Naive thymus-derived CD8-positive, alpha-beta T cell (primary cell): ENCODE measurements at regions of chr1 and their contacts with region 1.

Region 1: DNA sequence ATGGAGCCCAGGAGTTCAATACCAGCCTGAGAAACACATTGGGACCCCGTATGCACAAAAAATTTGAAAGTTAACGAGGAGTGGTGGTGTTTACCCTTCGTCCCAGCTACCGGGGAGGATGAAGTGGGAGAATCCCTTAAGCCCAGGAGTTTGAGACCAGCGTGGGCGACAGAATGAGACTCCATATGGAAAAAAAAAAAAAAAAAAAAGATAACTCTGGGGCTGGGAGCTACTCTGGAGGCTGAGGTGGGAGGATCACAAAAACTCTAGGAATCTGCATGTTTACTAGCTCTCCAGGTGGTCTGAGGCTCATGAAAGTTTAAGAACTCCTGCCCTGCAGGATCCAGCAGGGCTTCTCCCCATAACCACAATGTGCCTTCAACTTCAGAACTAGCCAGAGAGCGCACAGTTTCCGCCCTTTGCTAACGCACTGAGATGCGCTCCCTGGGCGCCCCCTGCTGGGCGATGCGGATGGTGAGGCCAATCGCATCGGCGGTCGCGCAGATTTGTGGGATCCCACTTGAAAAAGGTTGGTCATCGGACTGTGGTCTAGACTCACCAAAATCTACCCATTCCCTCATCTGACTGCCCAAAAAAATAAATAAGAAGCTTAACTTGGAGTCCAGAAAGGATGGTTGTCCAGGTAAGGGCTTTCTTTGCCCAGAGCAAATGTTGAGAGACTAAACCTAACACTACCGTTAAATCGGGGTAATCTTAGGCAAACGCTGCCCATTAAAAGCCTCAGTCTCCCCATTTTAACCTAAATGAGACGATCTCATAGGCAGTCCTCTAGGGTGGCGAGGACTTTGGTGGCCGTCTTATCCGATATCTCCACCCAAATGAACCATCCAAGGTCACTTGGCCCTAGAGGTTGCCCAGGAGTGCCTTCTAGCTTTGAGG is 8.8 kb downstream of the ZNF683 start:
- DNase-seq: peak; percentile 67 to 90 (median 82)
- ATAC-seq: peak; percentile 70 to 74
- H3K4me3 Mint-ChIP-seq: peak overlapping the region in 4 of 10 donors; percentile 48 to 59 (median 52)
- H3K27ac Mint-ChIP-seq: peak overlapping the region in 5 of 10 donors; percentile 20 to 86 (median 54)
- H3K4me1 Mint-ChIP-seq: peaks cover 30 to 69% (median 67%) of the 10 kb centered on the region in 4 donors
- H3K27me3 Mint-ChIP-seq: peaks cover 3 to 19% (median 9%) of the 10 kb centered on the region in 5 donors

Region 2: DNA sequence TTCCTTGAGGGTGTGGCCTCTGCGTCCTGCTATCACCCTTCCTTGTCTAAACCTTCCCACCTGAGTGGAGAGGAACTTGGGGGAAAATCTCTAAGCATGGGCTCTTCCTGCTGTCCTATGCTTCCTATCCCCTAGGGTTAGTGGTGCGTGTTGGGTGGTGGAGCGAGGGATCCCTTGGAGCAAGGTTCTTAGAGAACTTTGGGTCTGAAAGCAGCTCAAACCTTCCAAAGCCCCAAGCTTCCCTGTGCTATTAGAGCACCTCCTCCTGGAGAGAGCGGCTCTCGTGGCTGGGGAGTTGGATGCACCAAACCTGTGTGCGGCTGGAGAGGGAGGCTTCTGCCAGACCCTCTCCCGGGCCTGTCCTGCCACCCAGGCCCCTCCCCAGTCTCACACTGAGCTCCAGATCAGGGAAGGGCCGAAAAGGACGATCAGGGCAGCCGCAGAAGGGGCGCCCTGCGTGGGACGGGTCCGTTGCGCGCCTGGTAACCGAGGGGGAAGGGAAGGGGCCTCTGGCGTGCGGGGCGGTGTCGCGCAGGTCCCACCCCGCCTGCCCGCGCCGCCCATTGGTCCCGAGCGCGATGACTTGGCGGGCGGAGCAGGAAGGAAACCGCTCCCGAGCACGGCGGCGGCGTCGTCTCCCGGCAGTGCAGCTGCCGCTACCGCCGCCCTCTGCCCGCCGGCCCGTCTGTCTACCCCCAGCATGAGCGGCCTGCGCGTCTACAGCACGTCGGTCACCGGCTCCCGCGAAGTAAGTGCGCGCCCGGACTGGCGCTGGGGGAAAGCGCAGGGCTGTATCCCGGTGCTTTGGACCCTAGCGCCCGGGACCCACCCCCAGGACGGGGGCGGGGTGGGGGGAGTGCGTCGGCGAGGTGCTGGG is 84.1 kb before region 1 on chr1 and contains the start of gene SH3BGRL3:
- POLR2A ChIA-PET with region 1: interaction called, 11 read pairs
- DNase-seq: peak; percentile 73 to 89 (median 82)
- ATAC-seq: peak; percentile 66 to 70
- H3K4me3 Mint-ChIP-seq: peak within 1 kb of the TSS; percentile 86 to 95 (median 93)
- H3K27ac Mint-ChIP-seq: peak within 1 kb of the TSS; percentile 93 to 100 (median 96)
- H3K4me1 Mint-ChIP-seq: peaks cover 46 to 89% (median 87%) of the 10 kb centered on the region in 4 donors
- H3K27me3 Mint-ChIP-seq: no peaks in the 10 kb centered on the region
- polyA plus RNA-seq, gene SH3BGRL3: 805 to 925 (median 916) TPM

Region 3: GRCh38 chr1:26321315-26322041 is 42.3 kb before region 1 on chr1:
- POLR2A ChIA-PET with region 1: interaction called, 13 read pairs
- DNase-seq: peak; percentile 86 to 98 (median 92)
- ATAC-seq: peak; percentile 66 to 81
- H3K4me3 Mint-ChIP-seq: peak overlapping the region; percentile 79 to 100 (median 94)
- H3K27ac Mint-ChIP-seq: peak overlapping the region; percentile 87 to 99 (median 94)
- H3K4me1 Mint-ChIP-seq: peaks cover 28 to 70% (median 64%) of the 10 kb centered on the region in 4 donors
- H3K27me3 Mint-ChIP-seq: no peaks in the 10 kb centered on the region

Region 4: GRCh38 chr1:26378088-26378878 is 14.5 kb after region 1 on chr1:
- POLR2A ChIA-PET with region 1: interaction called, 75 read pairs
- DNase-seq: peak in 9 of 10 donors; percentile 33 to 87 (median 71)
- ATAC-seq: peak; percentile 93 to 98
- H3K4me3 Mint-ChIP-seq: peak overlapping the region; percentile 65 to 84 (median 74)
- H3K27ac Mint-ChIP-seq: peak overlapping the region; percentile 66 to 94 (median 90)
- H3K4me1 Mint-ChIP-seq: peaks cover 40 to 74% (median 65%) of the 10 kb centered on the region in 4 donors
- H3K27me3 Mint-ChIP-seq: peaks cover 0 to 3% (median 0%) of the 10 kb centered on the region in 5 donors